SK-N-SH (cell line): ENCODE measurements at regions of chr2 and their contacts with region 1.

Region 1: DNA sequence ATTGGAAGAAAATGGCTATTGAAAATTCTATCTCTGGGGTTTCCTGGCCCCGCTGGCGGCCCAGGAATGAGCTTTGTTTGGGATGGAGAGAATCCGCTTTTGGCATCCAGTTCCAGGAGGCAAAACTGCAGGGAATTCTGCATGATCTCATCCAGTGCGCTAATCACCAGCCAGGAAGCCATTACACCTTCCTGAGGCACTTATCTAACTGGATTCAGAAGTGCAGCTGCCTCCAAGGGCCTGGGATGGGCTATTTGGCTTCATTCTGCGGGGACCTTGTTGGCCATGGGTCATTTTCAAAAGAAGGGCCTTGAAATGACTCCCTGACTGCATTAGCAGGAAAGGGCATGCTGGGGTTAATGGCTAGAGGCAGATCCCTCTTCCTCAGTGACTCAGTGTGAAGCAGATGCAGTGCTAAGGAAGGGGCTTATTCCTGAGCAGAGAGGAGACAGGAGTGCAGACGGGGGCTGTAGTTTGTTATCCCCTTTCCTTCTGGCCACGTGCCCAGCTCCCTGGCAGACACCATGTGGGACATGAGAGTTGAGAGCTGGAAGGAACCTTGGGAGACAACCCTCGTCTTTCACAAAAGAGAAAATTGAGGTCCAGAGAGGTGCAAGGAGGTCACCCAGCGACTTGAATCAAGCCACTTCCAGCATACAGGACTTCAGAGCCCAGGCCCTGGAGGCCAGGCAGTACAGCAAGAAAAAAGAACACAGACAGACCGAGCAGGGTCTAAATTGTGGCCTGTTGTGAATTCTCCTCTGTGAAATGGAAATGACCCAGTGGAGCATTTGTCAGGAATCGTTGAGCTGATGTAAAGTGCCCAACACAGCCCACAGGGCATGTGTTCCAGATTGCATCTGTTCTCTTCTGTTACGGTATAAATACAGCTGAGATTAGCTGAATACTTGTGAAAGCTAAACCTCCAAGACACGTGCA is 161.8 kb downstream of the PRKCE start:
- DNase-seq: peak; percentile 56
- H3K4me3 ChIP-seq: no peak overlapping the region
- H3K27ac ChIP-seq: peak overlapping the region; percentile 57 to 93
- H3K4me1 ChIP-seq: peaks cover 17 to 49% of the 10 kb centered on the region in 2 experiments
- H3K27me3 ChIP-seq: no peaks in the 10 kb centered on the region
- CTCF ChIP-seq: no peak
- EP300 ChIP-seq: peak in 1 of 2 experiments; percentile 53; a peak in 2 of 4 replicates
- RAD21 ChIP-seq: 0 out of 2 replicates have a peak, but pooled peaks have one; percentile 13

Region 2: GRCh38 chr2:45759310-45759851 is 53.9 kb before region 1 on chr2:
- CTCF ChIA-PET with region 1: no interaction called
- POLR2A ChIA-PET with region 1: no interaction called
- DNase-seq: peak; percentile 79
- H3K4me3 ChIP-seq: peak overlapping the region; percentile 29; a peak in 3 of 4 replicates
- H3K27ac ChIP-seq: peak overlapping the region in 1 of 2 experiments; percentile 69
- H3K4me1 ChIP-seq: peaks cover 17 to 42% of the 10 kb centered on the region in 2 experiments; a peak in 2 of 4 replicates
- H3K27me3 ChIP-seq: no peaks in the 10 kb centered on the region
- CTCF ChIP-seq: no peak
- EP300 ChIP-seq: peak; percentile 0 to 53; a peak in 1 of 4 replicates
- RAD21 ChIP-seq: no peak

Region 3: GRCh38 chr2:45794134-45794617 is 19.1 kb before region 1 on chr2:
- CTCF ChIA-PET with region 1: interaction called, 11 read pairs
- POLR2A ChIA-PET with region 1: no interaction called
- DNase-seq: no peak
- H3K4me3 ChIP-seq: no peak overlapping the region
- H3K27ac ChIP-seq: no peak overlapping the region
- H3K4me1 ChIP-seq: peaks cover 0 to 18% of the 10 kb centered on the region in 2 experiments; a peak in 1 of 4 replicates
- H3K27me3 ChIP-seq: no peaks in the 10 kb centered on the region
- CTCF ChIP-seq: no peak
- EP300 ChIP-seq: no peak
- RAD21 ChIP-seq: no peak

Region 4: GRCh38 chr2:45802499-45803138 is 10.7 kb before region 1 on chr2:
- CTCF ChIA-PET with region 1: interaction called, 11 read pairs
- POLR2A ChIA-PET with region 1: no interaction called
- DNase-seq: no peak
- H3K4me3 ChIP-seq: no peak overlapping the region
- H3K27ac ChIP-seq: no peak overlapping the region
- H3K4me1 ChIP-seq: no peaks in the 10 kb centered on the region; a peak in 1 of 4 replicates
- H3K27me3 ChIP-seq: no peaks in the 10 kb centered on the region
- CTCF ChIP-seq: no peak
- EP300 ChIP-seq: no peak
- RAD21 ChIP-seq: no peak

Region 5: DNA sequence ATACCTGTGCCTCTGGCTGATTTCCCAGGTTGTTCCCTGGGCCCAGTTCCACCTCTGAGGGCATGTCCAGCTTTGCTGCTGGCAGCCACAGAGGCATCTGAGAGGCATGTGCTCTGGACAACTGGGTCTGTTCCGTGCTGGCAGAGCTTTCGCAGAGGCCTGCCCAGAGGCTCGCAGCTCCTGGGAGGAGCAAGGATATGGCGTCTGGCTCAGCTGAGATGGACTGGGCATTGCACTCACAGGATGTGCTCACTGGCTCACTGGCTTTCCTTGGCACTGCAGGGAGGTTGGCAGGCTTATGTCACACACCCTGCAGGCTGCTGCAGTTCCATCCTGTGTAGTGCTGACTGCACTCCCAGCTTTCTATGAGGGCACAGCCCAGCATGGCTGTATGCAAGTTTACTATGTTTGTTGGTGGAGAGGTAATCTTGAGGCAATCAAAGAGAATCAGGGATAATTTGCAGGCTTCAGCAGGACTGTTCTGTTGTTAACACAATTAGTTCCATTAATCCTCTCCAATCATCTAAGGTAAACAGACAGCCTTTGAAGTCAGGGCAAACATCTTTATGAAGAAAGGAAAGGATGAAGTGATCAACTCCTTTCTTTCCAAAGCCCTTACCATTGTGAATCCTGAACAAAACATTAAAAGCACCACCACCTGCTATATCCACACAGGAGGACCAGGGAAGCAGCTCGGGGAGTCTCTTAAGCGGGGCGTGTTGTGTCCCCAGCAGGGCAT is 10.6 kb after region 1 on chr2:
- CTCF ChIA-PET with region 1: interaction called, 14 read pairs
- POLR2A ChIA-PET with region 1: interaction called, 12 read pairs
- DNase-seq: peak; percentile 89
- H3K4me3 ChIP-seq: no peak overlapping the region
- H3K27ac ChIP-seq: peak overlapping the region in 1 of 2 experiments; percentile 96; a peak in 2 of 4 replicates
- H3K4me1 ChIP-seq: peaks cover 12 to 43% of the 10 kb centered on the region in 2 experiments; a peak in 2 of 4 replicates
- H3K27me3 ChIP-seq: no peaks in the 10 kb centered on the region
- CTCF ChIP-seq: no peak
- EP300 ChIP-seq: peak in 1 of 2 experiments; percentile 63; a peak in 2 of 4 replicates
- RAD21 ChIP-seq: peak; percentile 48